ENCODE measurements at regions of chr11 and their contacts with region 1.

Region 1: DNA sequence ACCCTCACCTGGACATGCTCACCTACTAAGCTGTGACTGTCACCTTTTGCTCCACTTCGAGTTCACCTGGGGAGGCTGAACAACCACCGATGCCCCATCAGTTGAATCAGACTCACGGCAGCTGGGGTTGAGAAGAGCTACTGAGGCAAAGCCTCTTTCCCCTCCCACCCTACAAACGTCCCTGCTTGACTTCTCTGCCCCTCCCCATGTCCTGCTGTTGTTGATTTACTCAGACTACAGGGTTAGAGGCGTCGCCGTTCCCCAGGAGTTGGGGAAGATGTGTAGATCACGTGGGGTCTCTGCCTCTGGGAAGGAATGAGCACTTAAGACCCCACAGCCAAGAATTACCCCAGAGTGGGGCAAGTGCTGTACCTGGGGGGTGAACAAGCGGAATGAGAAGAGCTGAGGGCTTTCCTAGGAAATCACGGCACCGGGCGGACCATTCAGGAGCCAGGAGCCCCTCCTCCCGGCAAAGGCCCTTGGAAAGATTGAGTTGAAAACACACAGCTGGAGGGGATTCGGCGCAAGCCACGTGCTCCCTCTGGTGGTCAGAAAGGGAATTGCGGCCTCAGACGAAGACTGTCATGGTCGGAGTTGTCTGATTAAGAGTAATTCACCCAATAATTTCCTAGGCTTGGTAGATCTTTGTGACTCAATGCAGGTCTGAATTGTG is 7.0 kb downstream of the FXYD2 start:
- DNase-seq: peak; percentile 96
- H3K4me3 Mint-ChIP-seq: peak overlapping the region; percentile 42
- H3K27ac Mint-ChIP-seq: peak overlapping the region; percentile 94
- H3K4me1 Mint-ChIP-seq: peaks cover 62% of the 10 kb centered on the region
- H3K27me3 Mint-ChIP-seq: no peaks in the 10 kb centered on the region

Region 2: DNA sequence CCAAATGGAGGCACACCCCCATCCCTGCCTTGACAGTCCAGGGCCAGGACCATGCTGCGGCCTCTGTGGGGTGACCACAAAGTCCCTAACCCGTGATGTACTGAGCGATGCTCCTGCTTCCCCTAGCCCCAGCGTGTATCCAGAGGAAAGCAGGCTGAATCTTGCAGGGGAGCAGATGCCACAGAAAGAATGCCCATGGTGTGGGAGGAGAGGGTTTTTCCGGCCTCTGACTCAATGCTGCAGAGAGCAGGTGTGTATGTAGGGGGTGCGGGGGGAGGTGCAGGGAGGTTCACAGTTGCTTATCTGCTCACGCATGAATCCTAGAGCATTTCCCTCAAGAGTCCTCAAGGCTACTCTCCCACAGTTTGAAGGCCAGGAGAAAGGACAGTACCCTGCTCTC is 359.2 kb before region 1 on chr11:
- CTCF ChIA-PET with region 1: interaction called, 3 read pairs
- POLR2A ChIA-PET with region 1: no interaction called
- intact Hi-C with region 1: loop called (anchors 5 kb)
- DNase-seq: peak; percentile 84
- H3K4me3 Mint-ChIP-seq: peak overlapping the region; percentile 30
- H3K27ac Mint-ChIP-seq: peak overlapping the region; percentile 66
- H3K4me1 Mint-ChIP-seq: peaks cover 31% of the 10 kb centered on the region
- H3K27me3 Mint-ChIP-seq: peaks cover 10% of the 10 kb centered on the region

Region 3: GRCh38 chr11:117843666-117844484 is 26.4 kb after region 1 on chr11:
- CTCF ChIA-PET with region 1: interaction called, 13 read pairs
- POLR2A ChIA-PET with region 1: no interaction called
- intact Hi-C with region 1: loop called (anchors 2 kb)
- DNase-seq: peak; percentile 90
- H3K4me3 Mint-ChIP-seq: no peak overlapping the region
- H3K27ac Mint-ChIP-seq: no peak overlapping the region
- H3K4me1 Mint-ChIP-seq: no peaks in the 10 kb centered on the region
- H3K27me3 Mint-ChIP-seq: no peaks in the 10 kb centered on the region

Region 4: GRCh38 chr11:117861151-117862018 is 43.9 kb after region 1 on chr11:
- CTCF ChIA-PET with region 1: no interaction called
- POLR2A ChIA-PET with region 1: no interaction called
- intact Hi-C with region 1: no loop called
- DNase-seq: no peak
- H3K4me3 Mint-ChIP-seq: no peak overlapping the region
- H3K27ac Mint-ChIP-seq: no peak overlapping the region
- H3K4me1 Mint-ChIP-seq: no peaks in the 10 kb centered on the region
- H3K27me3 Mint-ChIP-seq: peaks cover 4% of the 10 kb centered on the region

Region 5: GRCh38 chr11:117985953-117986887 is 168.7 kb after region 1 on chr11 and contains the start of gene IL10RA:
- CTCF ChIA-PET with region 1: interaction called, 4 read pairs
- POLR2A ChIA-PET with region 1: interaction called, 16 read pairs
- intact Hi-C with region 1: loop called (anchors 5 kb)
- DNase-seq: peak; percentile 91
- H3K4me3 Mint-ChIP-seq: peak within 1 kb of the TSS; percentile 82
- H3K27ac Mint-ChIP-seq: peak within 1 kb of the TSS; percentile 97
- H3K4me1 Mint-ChIP-seq: peaks cover 69% of the 10 kb centered on the region
- H3K27me3 Mint-ChIP-seq: no peaks in the 10 kb centered on the region
- total RNA-seq, gene IL10RA: 114 to 117 TPM